PC-9 (cell line): ENCODE measurements at regions of chr9 and their contacts with region 1.

Region 1: DNA sequence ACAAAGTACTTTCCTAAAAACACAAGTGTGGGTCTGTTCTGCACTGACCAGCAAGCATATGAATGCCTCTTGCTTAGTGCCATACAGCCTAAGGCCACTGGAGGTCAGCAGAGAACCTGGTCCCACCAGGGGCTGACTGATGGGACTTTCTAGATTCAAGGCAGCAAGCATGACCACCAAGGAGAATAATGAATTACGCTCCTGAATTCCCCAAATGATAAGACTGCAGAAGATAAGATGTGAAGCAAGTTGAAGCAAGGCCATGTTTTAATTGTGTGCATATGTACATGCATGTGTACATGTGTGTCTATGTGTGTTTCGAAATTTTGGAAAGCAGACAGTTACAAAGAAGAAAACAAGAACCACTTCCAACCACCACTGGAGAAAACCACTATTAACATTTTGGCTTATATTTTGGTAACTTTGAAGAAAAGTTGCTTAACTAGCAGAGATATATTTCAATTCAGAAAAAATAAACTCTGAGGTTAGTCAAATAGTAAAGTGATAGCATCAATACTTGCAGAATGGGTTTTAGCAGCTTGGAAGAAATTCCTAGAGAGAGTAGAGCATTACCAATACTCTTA is 70.5 kb downstream of the ERP44 start:
- DNase-seq: peak; percentile 45 to 61
- H3K4me3 ChIP-seq: no peak overlapping the region
- H3K27ac ChIP-seq: no peak overlapping the region
- H3K4me1 ChIP-seq: no peaks in the 10 kb centered on the region
- H3K27me3 ChIP-seq: no peaks in the 10 kb centered on the region
- CTCF ChIP-seq: peak; percentile 87

Region 2: GRCh38 chr9:99266255-99267023 is 761.9 kb before region 1 on chr9:
- CTCF ChIA-PET with region 1: no interaction called
- POLR2A ChIA-PET with region 1: no interaction called
- intact Hi-C with region 1: loop called (anchors 1 kb)
- DNase-seq: peak in 1 of 2 experiments; percentile 57
- H3K4me3 ChIP-seq: no peak overlapping the region
- H3K27ac ChIP-seq: no peak overlapping the region
- H3K4me1 ChIP-seq: no peaks in the 10 kb centered on the region
- H3K27me3 ChIP-seq: no peaks in the 10 kb centered on the region
- CTCF ChIP-seq: peak; percentile 83

Region 3: GRCh38 chr9:99977033-99977792 is 51.1 kb before region 1 on chr9:
- CTCF ChIA-PET with region 1: no interaction called
- POLR2A ChIA-PET with region 1: interaction called, 17 read pairs
- intact Hi-C with region 1: no loop called
- DNase-seq: no peak
- H3K4me3 ChIP-seq: no peak overlapping the region
- H3K27ac ChIP-seq: no peak overlapping the region
- H3K4me1 ChIP-seq: no peaks in the 10 kb centered on the region
- H3K27me3 ChIP-seq: no peaks in the 10 kb centered on the region
- CTCF ChIP-seq: no peak

Region 4: DNA sequence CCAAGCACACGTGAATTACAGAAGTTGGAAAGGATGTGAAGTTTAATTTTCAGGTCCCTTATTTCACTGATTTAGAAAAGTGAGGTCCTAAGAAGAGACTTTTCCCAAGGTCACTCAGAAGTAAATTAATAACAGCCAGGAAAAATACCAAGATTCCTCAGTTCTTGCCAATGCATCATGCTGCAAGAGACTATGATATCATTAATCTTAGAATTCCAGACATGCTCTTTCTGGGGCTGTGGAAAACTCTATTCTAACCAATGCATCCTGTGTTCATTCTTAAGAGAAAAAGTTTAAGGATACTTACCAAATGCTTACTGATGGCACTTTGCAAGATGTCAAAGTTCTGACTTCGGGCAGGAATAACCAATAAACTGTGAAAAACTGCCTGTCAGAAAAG is 281.7 kb after region 1 on chr9:
- CTCF ChIA-PET with region 1: no interaction called
- POLR2A ChIA-PET with region 1: no interaction called
- intact Hi-C with region 1: no loop called
- DNase-seq: no peak
- H3K4me3 ChIP-seq: no peak overlapping the region
- H3K27ac ChIP-seq: no peak overlapping the region
- H3K4me1 ChIP-seq: no peaks in the 10 kb centered on the region
- H3K27me3 ChIP-seq: no peaks in the 10 kb centered on the region
- CTCF ChIP-seq: no peak

Region 5: GRCh38 chr9:100700689-100701318 is 672.5 kb after region 1 on chr9:
- CTCF ChIA-PET with region 1: no interaction called
- POLR2A ChIA-PET with region 1: no interaction called
- intact Hi-C with region 1: no loop called
- DNase-seq: no peak
- H3K4me3 ChIP-seq: no peak overlapping the region
- H3K27ac ChIP-seq: no peak overlapping the region
- H3K4me1 ChIP-seq: no peaks in the 10 kb centered on the region
- H3K27me3 ChIP-seq: peaks cover 7% of the 10 kb centered on the region; the same call in 1 of the 2 replicates
- CTCF ChIP-seq: peak; percentile 63